CD4-positive, alpha-beta T cell (primary cell): ENCODE measurements at regions of chr16 and their contacts with region 1.

Region 1: GRCh38 chr16:10964039-10964890 is 19.9 kb downstream of the CLEC16A start:
- DNase-seq: peak; percentile 65 to 91 (median 78)
- ATAC-seq: peak; percentile 49
- H3K4me3 ChIP-seq: peak overlapping the region; percentile 9
- H3K4me3 Mint-ChIP-seq: peak overlapping the region; percentile 38
- H3K27ac ChIP-seq: no peak overlapping the region
- H3K27ac Mint-ChIP-seq: peak overlapping the region; percentile 76
- H3K4me1 ChIP-seq: peaks cover 28% of the 10 kb centered on the region
- H3K4me1 Mint-ChIP-seq: peaks cover 30% of the 10 kb centered on the region
- H3K27me3 ChIP-seq: no peaks in the 10 kb centered on the region
- H3K27me3 Mint-ChIP-seq: no peaks in the 10 kb centered on the region
- CTCF ChIP-seq: peak; percentile 99

Region 2: GRCh38 chr16:10652730-10653590 is 311.3 kb before region 1 on chr16:
- CTCF ChIA-PET with region 1: no interaction called
- POLR2A ChIA-PET with region 1: no interaction called
- intact Hi-C with region 1: no loop called
- DNase-seq: no peak
- ATAC-seq: no peak
- H3K4me3 ChIP-seq: no peak overlapping the region
- H3K4me3 Mint-ChIP-seq: no peak overlapping the region
- H3K27ac ChIP-seq: no peak overlapping the region
- H3K27ac Mint-ChIP-seq: no peak overlapping the region
- H3K4me1 ChIP-seq: no peaks in the 10 kb centered on the region
- H3K4me1 Mint-ChIP-seq: no peaks in the 10 kb centered on the region
- H3K27me3 ChIP-seq: peaks cover 0 to 4% of the 10 kb centered on the region in 2 experiments
- H3K27me3 Mint-ChIP-seq: peaks cover 3% of the 10 kb centered on the region
- CTCF ChIP-seq: no peak

Region 3: DNA sequence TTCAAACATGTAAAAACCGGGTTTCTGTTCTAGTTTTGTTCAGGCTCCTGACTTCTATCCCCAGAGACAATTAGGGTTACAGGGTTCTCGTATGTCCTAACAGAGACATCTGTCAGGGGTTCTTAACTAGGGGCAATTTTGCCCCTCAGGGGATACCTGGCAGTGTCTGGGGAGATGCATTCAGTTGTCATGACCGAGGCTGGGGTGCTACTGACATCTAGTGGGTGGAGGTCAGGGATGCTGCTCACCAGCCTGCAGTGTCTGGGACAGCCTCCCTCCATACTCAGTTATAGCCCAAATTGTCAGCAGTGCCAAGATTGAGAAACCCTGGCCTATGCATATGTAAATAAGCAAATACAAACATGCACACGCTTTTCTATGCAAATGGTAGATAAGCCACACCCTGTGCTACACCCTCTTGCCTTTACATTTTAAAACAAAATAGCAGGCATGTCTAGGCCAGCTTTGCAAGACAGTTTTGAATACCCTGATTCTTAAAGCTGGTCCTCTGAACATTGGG is 17.5 kb after region 1 on chr16:
- CTCF ChIA-PET with region 1: interaction called, 20 read pairs
- POLR2A ChIA-PET with region 1: no interaction called
- intact Hi-C with region 1: no loop called
- DNase-seq: peak in 10 of 14 experiments; percentile 12 to 50 (median 33)
- ATAC-seq: peak; percentile 48
- H3K4me3 ChIP-seq: no peak overlapping the region
- H3K4me3 Mint-ChIP-seq: no peak overlapping the region
- H3K27ac ChIP-seq: no peak overlapping the region
- H3K27ac Mint-ChIP-seq: no peak overlapping the region
- H3K4me1 ChIP-seq: peaks cover 9% of the 10 kb centered on the region
- H3K4me1 Mint-ChIP-seq: peaks cover 18% of the 10 kb centered on the region
- H3K27me3 ChIP-seq: no peaks in the 10 kb centered on the region
- H3K27me3 Mint-ChIP-seq: no peaks in the 10 kb centered on the region
- CTCF ChIP-seq: no peak

Region 4: DNA sequence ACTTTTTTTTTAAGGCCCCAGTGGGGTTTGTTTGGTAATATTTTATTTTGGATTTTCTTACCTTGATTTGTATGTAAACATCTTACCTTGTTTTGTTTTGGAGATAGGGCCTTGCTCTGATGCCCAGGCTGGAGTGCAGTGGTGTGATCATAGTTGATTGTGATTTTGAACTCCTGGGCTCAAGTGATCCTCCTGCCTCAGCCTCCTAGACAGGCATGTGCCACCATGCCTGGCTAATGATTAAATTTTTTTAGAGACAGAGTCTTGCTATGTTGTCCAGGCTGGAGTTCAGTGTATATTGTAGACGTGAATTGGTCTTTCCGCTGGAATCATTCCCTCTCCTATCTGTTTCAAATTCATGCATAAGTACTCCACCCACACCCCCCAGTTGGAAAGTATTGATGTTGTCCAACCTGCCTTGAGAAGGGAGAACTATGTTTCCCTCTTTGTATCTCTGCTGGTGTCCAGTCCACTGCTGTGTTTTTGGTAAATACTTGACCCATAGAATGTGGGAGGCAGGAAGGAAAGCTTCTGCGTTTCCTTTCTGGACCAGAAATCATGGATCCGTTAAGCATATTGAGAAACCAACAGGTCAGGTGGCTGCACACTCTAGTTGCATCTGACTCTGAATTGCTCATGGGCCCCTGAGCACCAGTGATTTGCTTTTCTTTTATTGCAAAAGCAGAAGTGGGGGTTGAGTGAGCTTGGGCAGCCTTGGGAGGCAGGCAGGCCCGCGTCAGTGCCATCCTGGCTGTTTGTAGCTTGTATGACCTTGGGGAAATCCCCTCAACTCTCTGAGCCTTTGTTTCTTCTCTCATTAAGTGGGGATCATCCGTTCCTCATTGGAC is 406.0 kb after region 1 on chr16:
- CTCF ChIA-PET with region 1: interaction called, 6 read pairs
- POLR2A ChIA-PET with region 1: interaction called, 3 read pairs
- intact Hi-C with region 1: loop called in 1 of 2 experiments (anchors 2 kb)
- DNase-seq: peak in 3 of 14 experiments; percentile 13 to 69 (median 68)
- ATAC-seq: peak; percentile 70
- H3K4me3 ChIP-seq: no peak overlapping the region
- H3K4me3 Mint-ChIP-seq: no peak overlapping the region
- H3K27ac ChIP-seq: no peak overlapping the region
- H3K27ac Mint-ChIP-seq: no peak overlapping the region
- H3K4me1 ChIP-seq: no peaks in the 10 kb centered on the region
- H3K4me1 Mint-ChIP-seq: peaks cover 9% of the 10 kb centered on the region
- H3K27me3 ChIP-seq: no peaks in the 10 kb centered on the region
- H3K27me3 Mint-ChIP-seq: no peaks in the 10 kb centered on the region
- CTCF ChIP-seq: no peak

Region 5: DNA sequence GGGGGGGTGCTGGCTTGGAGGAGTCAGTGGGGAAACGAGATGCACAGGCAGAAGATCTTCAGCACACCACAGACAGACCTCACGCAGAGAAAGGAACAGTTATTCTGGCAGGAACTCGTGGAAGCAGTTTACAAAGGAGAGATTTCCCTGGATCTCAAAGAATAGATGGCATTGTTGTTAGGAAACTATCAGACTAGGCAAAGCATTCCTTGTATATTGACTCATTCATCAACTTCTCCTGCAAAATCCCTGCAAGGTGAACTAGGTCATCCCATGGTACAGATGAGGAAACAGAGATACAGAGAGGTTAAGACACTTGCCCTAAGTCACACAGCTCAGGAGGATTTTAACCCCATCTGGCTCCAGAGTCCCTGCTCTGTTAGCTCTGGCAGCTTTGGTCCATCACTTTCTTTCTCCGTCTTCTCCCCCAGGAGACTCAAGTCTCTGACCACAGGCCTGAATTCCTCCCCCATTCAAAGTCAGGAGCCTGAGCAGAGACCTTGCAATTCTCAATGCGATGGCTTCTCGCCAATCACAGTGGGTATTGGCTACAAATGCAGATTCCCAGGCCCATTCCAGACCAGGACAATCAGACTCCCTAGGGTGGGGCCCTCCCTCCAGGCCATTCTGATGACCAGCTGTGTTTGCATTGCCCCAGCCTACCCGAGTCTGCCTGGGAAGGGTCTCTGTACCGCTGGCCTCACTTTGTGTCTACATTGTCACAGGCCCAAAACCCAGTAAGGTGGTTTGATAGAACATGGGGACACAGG is 566.1 kb after region 1 on chr16:
- CTCF ChIA-PET with region 1: interaction called, 3 read pairs
- POLR2A ChIA-PET with region 1: no interaction called
- intact Hi-C with region 1: loop called in 1 of 2 experiments (anchors 2 kb)
- DNase-seq: no peak
- ATAC-seq: no peak
- H3K4me3 ChIP-seq: no peak overlapping the region
- H3K4me3 Mint-ChIP-seq: no peak overlapping the region
- H3K27ac ChIP-seq: no peak overlapping the region
- H3K27ac Mint-ChIP-seq: no peak overlapping the region
- H3K4me1 ChIP-seq: peaks cover 3% of the 10 kb centered on the region
- H3K4me1 Mint-ChIP-seq: peaks cover 6% of the 10 kb centered on the region
- H3K27me3 ChIP-seq: peaks cover 0 to 3% of the 10 kb centered on the region in 2 experiments
- H3K27me3 Mint-ChIP-seq: no peaks in the 10 kb centered on the region
- CTCF ChIP-seq: no peak

Region 6: GRCh38 chr16:11819798-11820197 is 855.5 kb after region 1 on chr16:
- CTCF ChIA-PET with region 1: no interaction called
- POLR2A ChIA-PET with region 1: no interaction called
- intact Hi-C with region 1: loop called in 1 of 2 experiments (anchors 10 kb)
- DNase-seq: peak in 2 of 14 experiments; percentile 19 to 37
- ATAC-seq: no peak
- H3K4me3 ChIP-seq: no peak overlapping the region
- H3K4me3 Mint-ChIP-seq: no peak overlapping the region
- H3K27ac ChIP-seq: no peak overlapping the region
- H3K27ac Mint-ChIP-seq: no peak overlapping the region
- H3K4me1 ChIP-seq: peaks cover 2% of the 10 kb centered on the region
- H3K4me1 Mint-ChIP-seq: no peaks in the 10 kb centered on the region
- H3K27me3 ChIP-seq: no peaks in the 10 kb centered on the region
- H3K27me3 Mint-ChIP-seq: no peaks in the 10 kb centered on the region
- CTCF ChIP-seq: no peak